Endothelial cell of umbilical vein (primary cell): ENCODE measurements at regions of chr15 and their contacts with region 1.

Region 1: GRCh38 chr15:78241007-78241406 is 6.6 kb upstream of the ACSBG1 start:
- DNase-seq: peak; percentile 65
- H3K4me3 ChIP-seq: no peak overlapping the region
- H3K27ac ChIP-seq: no peak overlapping the region
- H3K4me1 ChIP-seq: no peaks in the 10 kb centered on the region
- H3K27me3 ChIP-seq: peaks cover 0 to 4% of the 10 kb centered on the region in 2 experiments
- CTCF ChIP-seq: peak; percentile 78 to 92
- POLR2A ChIP-seq: no peak

Region 2: GRCh38 chr15:77507911-77508310 is 733.1 kb before region 1 on chr15:
- CTCF ChIA-PET with region 1: no interaction called
- POLR2A ChIA-PET with region 1: no interaction called
- dilution Hi-C with region 1: no loop called
- intact Hi-C with region 1: no loop called
- DNase-seq: peak; percentile 82
- H3K4me3 ChIP-seq: peak overlapping the region in 1 of 3 experiments; percentile 20
- H3K27ac ChIP-seq: peak overlapping the region; percentile 95
- H3K4me1 ChIP-seq: peaks cover 39% of the 10 kb centered on the region
- H3K27me3 ChIP-seq: no peaks in the 10 kb centered on the region
- CTCF ChIP-seq: no peak
- POLR2A ChIP-seq: no peak

Region 3: GRCh38 chr15:77959432-77959879 is 281.6 kb before region 1 on chr15:
- CTCF ChIA-PET with region 1: interaction called, 33 read pairs
- POLR2A ChIA-PET with region 1: no interaction called
- dilution Hi-C with region 1: no loop called
- intact Hi-C with region 1: loop called (anchors 1 kb)
- DNase-seq: peak; percentile 76
- H3K4me3 ChIP-seq: peak overlapping the region in 1 of 3 experiments; percentile 32
- H3K27ac ChIP-seq: no peak overlapping the region
- H3K4me1 ChIP-seq: no peaks in the 10 kb centered on the region
- H3K27me3 ChIP-seq: peaks cover 3 to 8% of the 10 kb centered on the region in 2 experiments
- CTCF ChIP-seq: peak; percentile 84 to 93
- POLR2A ChIP-seq: no peak

Region 4: GRCh38 chr15:78131295-78132061 is 109.5 kb before region 1 on chr15 and contains the start of gene CIB2:
- CTCF ChIA-PET with region 1: interaction called, 50 read pairs
- POLR2A ChIA-PET with region 1: no interaction called
- dilution Hi-C with region 1: no loop called
- intact Hi-C with region 1: loop called (anchors 1 kb)
- DNase-seq: peak; percentile 64
- H3K4me3 ChIP-seq: peak within 1 kb of the TSS; percentile 43 to 71 (median 68)
- H3K27ac ChIP-seq: no peak within 1 kb of the TSS
- H3K4me1 ChIP-seq: peaks cover 7% of the 10 kb centered on the region
- H3K27me3 ChIP-seq: no peaks in the 10 kb centered on the region
- CTCF ChIP-seq: peak; percentile 58 to 61
- POLR2A ChIP-seq: no peak
- total RNA-seq, gene CIB2: 2.5 and 4.0 TPM in 2 replicates

Region 5: GRCh38 chr15:78195735-78196201 is 45.2 kb before region 1 on chr15:
- CTCF ChIA-PET with region 1: interaction called, 16 read pairs
- POLR2A ChIA-PET with region 1: no interaction called
- dilution Hi-C with region 1: no loop called
- intact Hi-C with region 1: loop called (anchors 2 kb)
- DNase-seq: peak; percentile 32
- H3K4me3 ChIP-seq: no peak overlapping the region
- H3K27ac ChIP-seq: no peak overlapping the region
- H3K4me1 ChIP-seq: no peaks in the 10 kb centered on the region
- H3K27me3 ChIP-seq: peaks cover 0 to 2% of the 10 kb centered on the region in 2 experiments
- CTCF ChIP-seq: peak; percentile 64 to 75
- POLR2A ChIP-seq: no peak

Region 6: GRCh38 chr15:78457101-78457500 is 216.1 kb after region 1 on chr15:
- CTCF ChIA-PET with region 1: no interaction called
- POLR2A ChIA-PET with region 1: no interaction called
- dilution Hi-C with region 1: no loop called
- intact Hi-C with region 1: no loop called
- DNase-seq: peak; percentile 37
- H3K4me3 ChIP-seq: no peak overlapping the region
- H3K27ac ChIP-seq: no peak overlapping the region
- H3K4me1 ChIP-seq: peaks cover 5% of the 10 kb centered on the region
- H3K27me3 ChIP-seq: no peaks in the 10 kb centered on the region
- CTCF ChIP-seq: no peak
- POLR2A ChIP-seq: no peak